ENCODE measurements at regions of chr3 and their contacts with region 1.

Region 1: DNA sequence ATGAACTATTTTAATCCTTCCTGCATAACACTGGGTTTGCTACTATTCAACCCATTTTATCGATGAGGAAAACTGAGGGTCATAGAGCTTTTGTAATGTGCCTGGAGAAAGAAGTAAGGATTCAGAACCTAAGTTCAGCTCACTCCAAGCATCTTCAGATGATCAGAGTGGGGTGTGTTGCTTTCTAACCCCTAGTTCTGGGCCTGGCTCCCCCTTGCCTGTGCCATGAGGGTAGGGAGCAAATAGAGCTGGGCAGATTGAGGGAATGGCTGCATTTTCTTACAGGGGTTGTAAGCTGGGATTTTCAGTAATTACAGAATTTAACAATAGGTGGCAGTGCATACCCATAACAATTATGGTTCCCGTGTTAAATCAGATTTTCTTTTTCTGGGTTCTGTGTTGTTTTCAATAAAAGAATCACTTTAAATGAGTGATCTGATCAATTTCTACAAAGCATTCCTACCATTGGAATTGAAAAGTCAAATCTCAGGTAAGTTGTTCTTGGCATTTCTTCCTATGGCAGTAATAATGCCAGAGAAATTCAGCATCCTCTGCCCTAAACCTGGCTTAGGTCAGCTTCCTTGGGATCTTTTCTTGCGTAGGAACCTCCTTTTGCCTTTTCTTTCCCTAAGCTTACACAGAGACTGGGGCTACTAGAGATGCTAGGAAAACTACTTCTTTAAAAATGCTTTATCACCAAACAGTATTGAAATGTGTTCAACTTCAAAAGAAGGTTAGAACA is 103.8 kb upstream of the IL12A start:
- DNase-seq: no peak
- ATAC-seq: no peak
- H3K4me3 ChIP-seq: no peak overlapping the region
- H3K27ac ChIP-seq: no peak overlapping the region
- H3K4me1 ChIP-seq: peaks cover 18% of the 10 kb centered on the region
- H3K27me3 ChIP-seq: no peaks in the 10 kb centered on the region

Region 2: DNA sequence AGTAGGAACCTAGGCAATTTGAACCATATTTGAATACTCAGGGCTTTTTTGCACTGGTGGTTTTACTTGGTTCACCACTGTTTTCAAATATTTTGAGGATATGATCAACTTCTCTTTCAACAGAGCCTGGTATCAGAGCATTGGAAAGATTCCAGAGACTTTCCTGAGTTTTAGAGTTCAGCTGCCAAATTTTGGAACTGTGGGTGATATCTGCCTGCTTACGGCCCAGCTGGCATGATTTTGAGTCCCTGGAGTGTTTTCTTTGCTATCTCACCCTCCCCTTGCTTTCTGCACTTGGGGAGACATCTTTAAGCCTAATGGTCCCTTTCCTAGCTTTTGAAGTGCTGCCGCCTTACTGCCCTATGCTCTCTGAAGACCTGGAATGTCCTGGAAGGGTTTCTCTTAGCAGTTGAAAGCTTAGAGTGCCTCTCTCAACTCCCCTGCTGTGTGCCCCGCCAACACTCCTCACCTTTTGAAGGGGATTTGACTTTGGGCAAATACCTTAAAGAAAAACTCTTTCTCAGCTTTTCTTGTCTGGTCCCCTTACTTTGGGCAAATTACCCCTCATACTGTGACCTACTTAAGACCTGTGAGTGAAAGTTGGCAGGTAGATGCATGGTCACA is 543.8 kb before region 1 on chr3:
- intact Hi-C with region 1: no loop called
- DNase-seq: no peak
- ATAC-seq: no peak
- H3K4me3 ChIP-seq: no peak overlapping the region
- H3K27ac ChIP-seq: no peak overlapping the region
- H3K4me1 ChIP-seq: no peaks in the 10 kb centered on the region
- H3K27me3 ChIP-seq: no peaks in the 10 kb centered on the region

Region 3: GRCh38 chr3:159796744-159797143 is 88.1 kb before region 1 on chr3:
- intact Hi-C with region 1: no loop called
- DNase-seq: no peak
- ATAC-seq: peak; percentile 44 to 73
- H3K4me3 ChIP-seq: no peak overlapping the region
- H3K27ac ChIP-seq: no peak overlapping the region
- H3K4me1 ChIP-seq: peaks cover 9% of the 10 kb centered on the region
- H3K27me3 ChIP-seq: no peaks in the 10 kb centered on the region

Region 4: GRCh38 chr3:159828542-159828943 is 56.3 kb before region 1 on chr3:
- intact Hi-C with region 1: loop called in 2 of 4 experiments (anchors 5 to 10 kb)
- DNase-seq: no peak
- ATAC-seq: peak; percentile 52 to 65
- H3K4me3 ChIP-seq: no peak overlapping the region
- H3K27ac ChIP-seq: no peak overlapping the region
- H3K4me1 ChIP-seq: peaks cover 4% of the 10 kb centered on the region
- H3K27me3 ChIP-seq: no peaks in the 10 kb centered on the region

Region 5: DNA sequence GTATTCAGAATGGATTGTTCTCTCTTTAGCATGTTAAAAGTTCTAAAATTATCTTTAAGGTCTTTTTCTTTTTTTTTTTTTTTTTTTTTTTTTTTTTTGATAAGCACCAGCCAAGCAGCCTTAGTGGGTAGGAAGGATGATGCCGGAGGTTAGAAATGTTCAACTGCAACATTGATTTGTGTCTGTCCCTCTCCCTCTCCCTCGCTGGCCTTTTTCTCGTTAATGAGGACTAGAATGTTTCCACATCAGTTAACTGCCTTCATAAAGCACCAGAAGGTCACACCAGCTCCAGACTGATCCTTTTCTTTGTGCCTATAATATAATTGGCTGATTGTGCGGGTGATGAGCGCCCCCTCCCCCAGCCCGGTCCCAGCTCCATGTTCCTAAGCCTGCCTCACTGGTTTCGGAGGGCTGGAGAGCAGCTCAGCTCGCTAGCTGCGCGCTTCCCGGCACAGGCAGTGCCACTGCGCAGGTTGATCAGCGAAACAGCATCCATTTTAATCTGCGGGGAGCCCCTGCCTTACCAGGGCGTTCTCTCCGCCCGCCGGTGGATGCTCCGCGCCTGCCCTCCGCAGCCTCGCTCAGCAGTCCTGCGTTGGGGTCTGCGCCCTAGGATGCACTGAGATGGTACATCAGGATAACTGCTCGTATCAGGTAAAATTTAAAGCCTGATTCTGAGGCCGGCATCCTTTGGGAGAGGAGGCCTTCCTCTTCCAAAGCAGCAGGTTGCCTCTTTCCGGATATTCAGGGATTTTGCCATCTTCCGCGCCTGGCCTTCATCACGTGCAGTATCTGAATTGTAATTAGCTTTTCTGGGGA is 45.1 kb before region 1 on chr3:
- intact Hi-C with region 1: loop called in 1 of 4 experiments (anchors 10 kb)
- DNase-seq: peak; percentile 26 to 62 (median 54)
- ATAC-seq: peak; percentile 70 to 74
- H3K4me3 ChIP-seq: peak within 1 kb of the TSS; percentile 21
- H3K27ac ChIP-seq: peak within 1 kb of the TSS; percentile 22
- H3K4me1 ChIP-seq: peaks cover 8% of the 10 kb centered on the region
- H3K27me3 ChIP-seq: no peaks in the 10 kb centered on the region

Region 6: DNA sequence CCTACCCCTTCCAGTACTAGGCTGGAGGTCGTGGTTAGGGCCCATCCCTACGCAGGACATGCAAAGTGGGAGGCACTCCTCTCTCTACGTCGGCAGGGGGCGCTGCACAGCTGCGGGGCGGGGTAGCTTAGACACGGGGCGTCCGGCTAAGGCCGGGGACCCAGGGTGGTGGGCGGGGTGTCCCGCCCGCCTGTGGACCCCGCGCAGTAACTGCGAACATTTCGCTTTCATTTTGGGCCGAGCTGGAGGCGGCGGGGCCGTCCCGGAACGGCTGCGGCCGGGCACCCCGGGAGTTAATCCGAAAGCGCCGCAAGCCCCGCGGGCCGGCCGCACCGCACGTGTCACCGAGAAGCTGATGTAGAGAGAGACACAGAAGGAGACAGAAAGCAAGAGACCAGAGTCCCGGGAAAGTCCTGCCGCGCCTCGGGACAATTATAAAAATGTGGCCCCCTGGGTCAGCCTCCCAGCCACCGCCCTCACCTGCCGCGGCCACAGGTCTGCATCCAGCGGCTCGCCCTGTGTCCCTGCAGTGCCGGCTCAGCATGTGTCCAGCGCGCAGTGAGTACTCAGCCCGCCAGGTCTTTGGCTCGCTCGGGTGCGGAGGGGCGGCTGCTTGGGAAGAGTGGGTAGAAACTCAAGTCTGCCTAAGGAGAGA is 103.9 kb after region 1 on chr3 and contains the start of gene IL12A:
- intact Hi-C with region 1: loop called in 2 of 4 experiments (anchors 5 to 10 kb)
- DNase-seq: peak; percentile 77 to 92 (median 91)
- ATAC-seq: peak; percentile 97 to 98
- H3K4me3 ChIP-seq: peak within 1 kb of the TSS; percentile 79
- H3K27ac ChIP-seq: no peak within 1 kb of the TSS
- H3K4me1 ChIP-seq: no peaks in the 10 kb centered on the region
- H3K27me3 ChIP-seq: no peaks in the 10 kb centered on the region
- total RNA-seq, gene IL12A: 0.24 to 1.0 (median 0.38) TPM

Region 7: DNA sequence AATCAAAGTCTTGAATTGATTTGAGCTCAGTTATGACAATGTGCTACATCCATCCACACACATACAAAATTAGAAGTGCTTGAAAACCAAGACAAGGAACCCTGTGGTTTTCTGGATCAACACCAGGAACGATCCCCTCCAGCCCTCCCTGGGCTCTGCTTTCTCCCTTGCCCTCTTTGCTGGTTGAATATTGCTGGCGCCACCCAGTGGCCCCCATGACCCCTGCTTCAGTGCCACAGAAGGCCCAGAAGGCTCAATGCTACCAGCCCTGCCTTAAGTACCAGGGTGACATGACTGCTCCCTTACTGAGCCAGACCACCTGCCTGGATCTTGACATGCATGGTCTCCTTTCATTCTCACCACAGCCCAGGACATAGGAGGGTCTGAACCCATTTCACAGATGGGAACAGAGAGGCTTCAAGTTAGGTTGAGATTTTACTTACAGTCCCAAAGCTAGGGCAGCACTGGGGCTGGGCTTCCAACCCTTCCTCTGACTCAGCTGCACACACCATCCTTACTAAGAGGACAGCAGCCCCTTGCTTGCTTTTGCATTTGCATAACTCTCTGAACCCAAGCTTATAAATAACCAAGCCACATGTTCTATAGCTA is 118.8 kb after region 1 on chr3:
- intact Hi-C with region 1: loop called (anchors 5 to 10 kb)
- DNase-seq: peak; percentile 37 to 75 (median 74)
- ATAC-seq: peak; percentile 79 to 84
- H3K4me3 ChIP-seq: no peak overlapping the region
- H3K27ac ChIP-seq: no peak overlapping the region
- H3K4me1 ChIP-seq: no peaks in the 10 kb centered on the region
- H3K27me3 ChIP-seq: no peaks in the 10 kb centered on the region

Measured in right cardiac atrium (tissue), 5 donors.